Activated CD4-positive, alpha-beta T cell treated with anti-CD3 and anti-CD28 coated beads, Interleukin-2, amount 10 ng/mL, durations not matched to agents 24 days and 14 days (primary cell): ENCODE measurements at regions of chr5 and their contacts with region 1.

Region 1: DNA sequence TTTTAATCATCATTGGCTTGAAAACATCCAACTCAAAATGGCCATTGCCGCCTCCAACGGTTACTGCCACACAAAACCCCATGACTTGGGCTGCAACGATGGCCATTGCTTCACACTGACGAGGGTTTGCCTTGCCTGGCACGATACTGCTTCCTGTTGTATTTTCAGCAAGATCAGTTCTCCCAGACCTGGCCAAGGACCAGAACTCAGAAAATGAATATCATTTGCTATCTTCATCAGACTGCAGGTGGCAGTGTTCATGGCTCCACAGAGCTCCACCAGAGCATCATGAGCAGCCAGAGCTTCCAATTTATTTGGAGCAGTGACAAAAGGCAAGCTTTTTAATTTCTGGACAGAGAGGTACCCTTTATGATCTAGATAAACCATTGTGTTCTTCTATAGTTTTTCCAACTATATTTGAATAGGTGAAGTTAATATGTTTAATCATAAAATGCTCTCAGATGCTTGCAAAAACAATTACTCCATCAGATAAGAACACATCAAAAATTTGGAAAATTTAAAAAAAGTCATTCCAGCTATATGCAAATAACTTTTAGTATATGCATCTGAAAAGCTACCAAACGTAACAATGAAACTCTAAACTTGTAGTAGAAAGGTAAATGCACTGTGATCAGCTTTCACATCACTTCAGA is 10.4 kb downstream of the AMACR start:
- DNase-seq: peak; percentile 79
- H3K4me3 Mint-ChIP-seq: no peak overlapping the region
- H3K27ac Mint-ChIP-seq: no peak overlapping the region
- H3K4me1 Mint-ChIP-seq: peaks cover 21% of the 10 kb centered on the region
- H3K27me3 Mint-ChIP-seq: no peaks in the 10 kb centered on the region

Region 2: DNA sequence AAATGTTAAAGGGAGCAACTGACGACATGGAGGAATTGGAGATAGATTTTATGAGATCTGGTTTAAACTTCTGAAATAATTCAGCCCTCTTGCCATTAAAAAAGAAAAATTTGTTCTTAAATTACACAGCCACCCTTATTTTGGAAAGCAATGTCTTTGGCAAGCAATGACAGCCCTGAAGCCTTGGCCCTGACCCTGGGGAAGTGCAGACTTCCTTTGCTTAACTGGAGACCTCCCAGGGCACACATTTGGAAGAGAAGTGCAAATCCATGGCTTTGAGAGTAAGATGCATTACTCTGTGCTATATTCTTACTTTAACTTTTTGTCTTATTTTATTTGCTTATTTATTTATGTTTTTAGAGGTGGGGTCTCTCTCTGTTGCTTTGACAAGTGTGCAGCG is 39.3 kb before region 1 on chr5:
- intact Hi-C with region 1: no loop called
- DNase-seq: no peak
- H3K4me3 Mint-ChIP-seq: no peak overlapping the region
- H3K27ac Mint-ChIP-seq: no peak overlapping the region
- H3K4me1 Mint-ChIP-seq: no peaks in the 10 kb centered on the region
- H3K27me3 Mint-ChIP-seq: peaks cover 22% of the 10 kb centered on the region

Region 3: GRCh38 chr5:34007621-34008600 is 10.5 kb after region 1 on chr5 and contains the start of gene AMACR:
- intact Hi-C with region 1: loop called (anchors 1 kb)
- DNase-seq: peak; percentile 97
- H3K4me3 Mint-ChIP-seq: peak within 1 kb of the TSS; percentile 88
- H3K27ac Mint-ChIP-seq: peak within 1 kb of the TSS; percentile 91
- H3K4me1 Mint-ChIP-seq: peaks cover 27% of the 10 kb centered on the region
- H3K27me3 Mint-ChIP-seq: peaks cover 2% of the 10 kb centered on the region
- total RNA-seq, gene AMACR: 6.4 and 7.7 TPM in 2 replicates